Heart right ventricle (tissue), 16 donors: ENCODE measurements at regions of chr17 and their contacts with region 1.

Region 1: GRCh38 chr17:28252436-28252835 is 66.6 kb upstream of the TMEM97 start:
- DNase-seq: no peak
- ATAC-seq: no peak
- H3K4me3 ChIP-seq: no peak overlapping the region
- H3K27ac ChIP-seq: no peak overlapping the region
- H3K4me1 ChIP-seq: peaks cover 0 to 13% (median 9%) of the 10 kb centered on the region in 9 donors
- H3K27me3 ChIP-seq: peaks cover 0 to 45% (median 15%) of the 10 kb centered on the region in 7 donors
- CTCF ChIP-seq: no peak

Region 2: DNA sequence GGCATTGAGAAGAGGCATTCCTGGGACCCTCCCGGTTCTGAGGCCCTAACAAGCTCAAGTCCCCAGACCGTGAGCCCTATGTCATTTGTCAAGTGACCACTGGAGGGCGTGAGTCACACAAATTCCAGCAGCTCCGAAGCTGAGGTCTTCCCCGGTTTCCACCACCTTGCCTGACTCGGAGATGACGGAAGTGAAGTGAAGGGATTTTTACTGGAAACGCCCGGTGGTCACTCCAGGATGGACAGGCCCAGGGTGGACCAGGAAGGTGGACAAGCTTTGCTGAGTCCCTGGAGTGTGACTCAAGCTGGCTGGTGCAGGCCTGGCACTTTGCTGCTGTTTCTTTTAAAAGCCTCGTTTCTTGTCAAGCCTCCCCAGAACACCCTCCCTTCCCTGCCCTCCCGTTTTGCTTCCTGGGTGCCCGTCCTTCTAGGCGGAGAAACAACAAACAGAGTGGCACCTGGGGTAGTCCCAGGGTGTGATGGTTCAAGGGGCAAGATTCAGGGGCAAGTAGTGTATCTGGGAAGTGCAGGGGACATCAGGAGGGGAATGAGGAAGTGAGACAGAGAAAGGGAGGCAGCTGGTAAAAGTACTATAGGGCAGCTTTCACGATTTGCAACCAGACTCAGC is 446.8 kb before region 1 on chr17:
- intact Hi-C with region 1: loop called (anchors 5 to 10 kb)
- DNase-seq: peak; percentile 70 to 88
- ATAC-seq: peak; percentile 87 to 93 (median 91)
- H3K4me3 ChIP-seq: peak overlapping the region in 9 of 10 donors; percentile 4 to 49 (median 41)
- H3K27ac ChIP-seq: peak overlapping the region in 4 of 10 donors; percentile 22 to 82 (median 34)
- H3K4me1 ChIP-seq: peaks cover 0 to 30% (median 11%) of the 10 kb centered on the region in 9 donors
- H3K27me3 ChIP-seq: peaks cover 0 to 6% (median 0%) of the 10 kb centered on the region in 7 donors
- CTCF ChIP-seq: peak; percentile 77 to 90 (median 88)

Region 3: DNA sequence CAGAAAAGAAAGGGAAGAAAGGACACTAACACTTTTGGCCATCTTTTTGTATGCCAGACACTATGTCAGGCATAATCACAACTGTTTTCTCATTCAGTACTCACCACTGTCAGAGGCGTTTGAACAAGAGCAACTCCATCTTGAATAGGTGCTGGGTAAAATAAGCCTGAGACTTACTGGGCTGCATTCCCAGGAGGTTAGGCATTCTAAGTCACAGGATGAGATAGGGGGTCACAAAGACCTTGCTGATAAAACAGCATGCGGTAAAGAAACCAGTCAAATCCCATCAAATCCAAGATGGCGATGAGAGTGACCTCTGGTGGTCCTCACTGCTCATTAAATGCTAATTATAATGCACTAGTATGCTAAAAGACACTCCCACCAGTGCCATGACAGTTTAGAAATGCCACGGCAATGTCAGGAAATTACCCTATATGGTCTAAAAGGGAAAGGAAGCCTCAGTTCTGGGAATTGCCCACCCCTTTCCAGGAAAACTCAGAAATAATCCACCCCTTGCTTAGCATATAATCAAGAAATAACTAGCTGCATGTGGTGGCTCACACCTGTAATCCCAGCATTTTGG is 344.4 kb before region 1 on chr17:
- intact Hi-C with region 1: loop called in 1 of 10 experiments (anchors 10 kb)
- DNase-seq: no peak
- ATAC-seq: no peak
- H3K4me3 ChIP-seq: no peak overlapping the region
- H3K27ac ChIP-seq: no peak overlapping the region
- H3K4me1 ChIP-seq: no peaks in the 10 kb centered on the region
- H3K27me3 ChIP-seq: peaks cover 0 to 3% (median 0%) of the 10 kb centered on the region in 7 donors
- CTCF ChIP-seq: no peak

Region 4: GRCh38 chr17:28180449-28180848 is 72.0 kb before region 1 on chr17:
- intact Hi-C with region 1: no loop called
- DNase-seq: no peak
- ATAC-seq: no peak
- H3K4me3 ChIP-seq: no peak overlapping the region
- H3K27ac ChIP-seq: no peak overlapping the region
- H3K4me1 ChIP-seq: peaks cover 0 to 4% (median 0%) of the 10 kb centered on the region in 9 donors
- H3K27me3 ChIP-seq: no peaks in the 10 kb centered on the region
- CTCF ChIP-seq: no peak